B cell (primary cell): ENCODE measurements at regions of chr1 and their contacts with region 1.

Region 1: GRCh38 chr1:16042096-16042495 is 1.5 kb upstream of the CLCNKB start:
- DNase-seq: no peak
- ATAC-seq: no peak
- H3K4me3 ChIP-seq: no peak overlapping the region
- H3K4me3 Mint-ChIP-seq: no peak overlapping the region
- H3K27ac ChIP-seq: no peak overlapping the region
- H3K27ac Mint-ChIP-seq: no peak overlapping the region
- H3K4me1 ChIP-seq: no peaks in the 10 kb centered on the region
- H3K4me1 Mint-ChIP-seq: no peaks in the 10 kb centered on the region
- H3K27me3 ChIP-seq: no peaks in the 10 kb centered on the region
- H3K27me3 Mint-ChIP-seq: peaks cover 13% of the 10 kb centered on the region
- CTCF ChIP-seq: no peak

Region 2: GRCh38 chr1:16017461-16018303 is 24.4 kb before region 1 on chr1 and contains the start of gene HSPB7:
- CTCF ChIA-PET with region 1: no interaction called
- POLR2A ChIA-PET with region 1: interaction called, 8 read pairs
- intact Hi-C with region 1: loop called (anchors 2 kb)
- DNase-seq: no peak
- ATAC-seq: no peak
- H3K4me3 ChIP-seq: no peak within 1 kb of the TSS
- H3K4me3 Mint-ChIP-seq: no peak within 1 kb of the TSS
- H3K27ac ChIP-seq: no peak within 1 kb of the TSS
- H3K27ac Mint-ChIP-seq: no peak within 1 kb of the TSS
- H3K4me1 ChIP-seq: peaks cover 12 to 26% of the 10 kb centered on the region in 2 donors
- H3K4me1 Mint-ChIP-seq: peaks cover 21% of the 10 kb centered on the region
- H3K27me3 ChIP-seq: no peaks in the 10 kb centered on the region
- H3K27me3 Mint-ChIP-seq: peaks cover 8% of the 10 kb centered on the region
- CTCF ChIP-seq: no peak
- total RNA-seq, gene HSPB7: not detected in 2 replicates